ENCODE measurements at regions of chr2 and their contacts with region 1.

Region 1: DNA sequence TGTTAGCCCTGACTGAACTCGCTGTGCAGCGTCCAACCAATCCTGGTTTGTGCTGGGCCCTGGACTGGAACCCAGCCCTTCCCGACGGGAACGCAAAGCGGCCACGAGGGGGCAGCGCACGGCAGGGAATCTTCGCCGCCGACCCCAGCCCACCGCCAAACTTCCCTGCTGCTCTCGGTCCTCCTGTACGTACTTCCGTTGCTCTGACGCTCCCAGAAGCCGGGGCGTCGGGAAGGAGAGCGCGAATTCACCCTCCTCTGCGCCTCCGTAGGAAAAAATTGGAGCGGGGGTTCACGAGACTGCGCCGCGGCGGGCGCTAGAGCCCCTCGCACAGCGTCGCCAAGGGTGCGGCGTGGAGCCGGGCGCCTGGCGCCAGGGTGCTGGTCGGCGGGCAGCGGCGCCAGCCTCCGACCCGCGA is 948 bp upstream of the SH3RF3 start:
- DNase-seq: peak; percentile 54 to 73
- ATAC-seq: peak; percentile 77

Region 2: DNA sequence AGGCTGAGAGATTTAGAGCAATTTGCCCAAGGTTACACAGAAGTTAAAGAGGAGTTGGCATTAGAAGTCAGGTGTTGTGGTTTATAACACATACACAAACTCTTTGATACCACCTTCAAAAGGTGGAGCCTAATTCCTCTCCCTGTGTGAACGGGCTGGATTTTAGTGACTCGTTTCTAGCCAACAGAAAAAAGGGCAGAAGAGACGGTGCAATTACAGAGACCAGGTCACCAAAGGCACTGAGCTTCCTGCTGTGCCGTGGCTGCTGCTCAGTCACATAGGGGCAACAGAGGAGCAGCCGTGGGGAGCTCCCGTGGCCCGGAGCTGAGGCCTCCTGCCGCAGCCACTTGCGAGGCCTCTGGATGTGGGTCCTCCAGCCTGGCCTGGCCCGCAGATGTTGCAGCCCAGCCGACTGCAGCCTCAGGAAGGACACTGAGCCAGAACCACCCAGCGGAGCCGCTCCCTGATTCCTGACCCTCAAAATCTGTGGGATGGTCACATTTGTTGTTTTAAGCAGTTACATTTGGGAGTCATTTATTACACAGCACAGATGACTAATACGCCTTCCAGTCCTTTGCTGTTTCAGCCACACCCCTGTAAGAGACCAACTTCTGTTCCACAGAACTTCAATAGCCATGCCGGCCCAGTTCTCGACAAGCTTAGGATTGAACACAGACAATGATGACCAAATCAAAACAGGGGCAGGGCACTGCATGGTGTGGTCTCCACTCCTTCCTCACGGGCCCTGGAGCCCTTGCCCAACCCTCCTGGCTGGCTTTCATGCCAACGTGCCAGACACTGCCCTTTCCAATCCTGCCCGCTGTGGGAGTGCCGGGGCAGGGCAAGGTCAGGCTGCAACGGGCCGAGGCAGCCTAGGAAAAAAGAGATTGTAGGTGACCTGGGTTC is 156.1 kb before region 1 on chr2:
- intact Hi-C with region 1: no loop called
- DNase-seq: peak; percentile 77 to 82
- ATAC-seq: peak; percentile 78

Region 3: DNA sequence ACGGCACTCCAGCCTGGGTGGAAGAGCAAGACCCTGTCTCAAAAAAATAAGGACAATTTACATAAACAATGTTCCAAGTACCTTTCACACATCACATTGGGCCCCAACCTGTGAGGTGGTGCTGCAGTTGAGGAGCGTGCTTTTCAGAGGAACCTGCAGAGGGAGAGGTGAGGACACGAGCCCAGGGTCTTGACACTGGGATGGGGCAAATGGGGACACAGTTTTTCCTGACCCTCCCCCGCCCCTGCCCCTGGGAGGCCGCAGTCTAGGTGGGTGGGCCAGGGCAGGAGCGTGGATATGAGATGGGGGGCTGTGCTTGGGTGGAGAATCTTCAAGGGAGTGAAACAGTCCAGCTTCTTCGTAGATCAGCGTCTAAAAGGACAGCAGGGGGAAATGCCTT is 372.9 kb after region 1 on chr2:
- intact Hi-C with region 1: loop called (anchors 5 kb)
- DNase-seq: no peak
- ATAC-seq: no peak

Region 4: DNA sequence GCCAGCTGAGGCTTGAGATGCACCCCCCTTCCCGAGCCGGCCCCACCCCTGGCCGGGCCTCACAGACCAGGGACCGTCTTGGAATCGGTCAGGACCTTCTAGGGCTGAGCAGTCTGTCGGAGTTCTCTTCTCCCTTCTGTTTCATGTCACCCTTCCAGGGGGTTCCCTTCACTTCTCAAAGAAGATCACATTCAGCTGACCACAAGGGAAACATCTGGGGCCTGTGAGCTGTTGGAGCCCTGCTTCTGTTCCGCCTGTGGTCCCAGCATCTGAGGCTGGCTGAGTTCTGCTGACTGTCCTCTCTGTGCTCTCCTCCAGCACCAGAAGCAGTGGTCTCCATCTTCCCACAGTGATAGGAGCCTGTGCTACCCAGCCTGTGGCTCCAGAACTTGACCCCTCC is 379.2 kb after region 1 on chr2:
- intact Hi-C with region 1: loop called (anchors 5 kb)
- DNase-seq: no peak
- ATAC-seq: no peak